Cardiac septum (tissue), 1 donor: ENCODE measurements at regions of chr16 and their contacts with region 1.

Region 1: GRCh38 chr16:23408823-23409298 is 44.1 kb downstream of the COG7 start:
- DNase-seq: no peak

Region 2: GRCh38 chr16:23182460-23183309 is 226.2 kb before region 1 on chr16 and contains the start of gene SCNN1G:
- intact Hi-C with region 1: loop called (anchors 10 kb)
- DNase-seq: peak; percentile 76
- total RNA-seq, gene SCNN1G: not detected